ENCODE measurements at regions of chr1 and their contacts with region 1.

Region 1: GRCh38 chr1:218677026-218677425 is 331.9 kb downstream of the TGFB2 start:
- DNase-seq: no peak
- H3K4me3 ChIP-seq: no peak overlapping the region
- H3K27me3 ChIP-seq: no peaks in the 10 kb centered on the region; the same call in 1 of the 2 replicates
- CTCF ChIP-seq: no peak

Region 2: DNA sequence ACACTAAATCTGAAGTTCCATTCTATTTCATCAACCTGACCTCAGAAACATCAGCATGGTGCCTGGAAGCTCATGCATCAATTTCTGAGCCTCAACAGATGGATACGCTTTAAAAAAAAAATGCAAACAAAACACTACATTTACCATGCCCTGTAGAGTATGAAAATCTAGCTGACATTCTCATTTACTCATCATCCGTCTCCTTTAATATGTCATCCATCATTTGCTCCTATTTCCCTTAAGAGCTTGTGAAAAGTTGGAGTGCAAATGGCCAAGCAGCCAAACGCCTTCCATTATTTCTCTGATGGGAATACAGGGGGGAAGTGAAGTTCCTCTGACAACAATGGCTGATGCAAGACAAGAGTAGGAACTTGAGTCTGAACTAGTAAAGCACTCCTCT is 36.9 kb before region 1 on chr1:
- CTCF ChIA-PET with region 1: no interaction called
- POLR2A ChIA-PET with region 1: interaction called, 10 read pairs
- DNase-seq: no peak
- H3K4me3 ChIP-seq: no peak overlapping the region
- H3K27me3 ChIP-seq: no peaks in the 10 kb centered on the region
- CTCF ChIP-seq: no peak

Region 3: GRCh38 chr1:218705911-218706893 is 29.2 kb after region 1 on chr1:
- CTCF ChIA-PET with region 1: no interaction called
- POLR2A ChIA-PET with region 1: no interaction called
- DNase-seq: peak; percentile 95
- H3K4me3 ChIP-seq: no peak overlapping the region
- H3K27me3 ChIP-seq: no peaks in the 10 kb centered on the region
- CTCF ChIP-seq: no peak

Measured in BJ (cell line).